Dorsolateral prefrontal cortex (tissue), 120 donors: ENCODE measurements at regions of chr2 and their contacts with region 1.

Region 1: DNA sequence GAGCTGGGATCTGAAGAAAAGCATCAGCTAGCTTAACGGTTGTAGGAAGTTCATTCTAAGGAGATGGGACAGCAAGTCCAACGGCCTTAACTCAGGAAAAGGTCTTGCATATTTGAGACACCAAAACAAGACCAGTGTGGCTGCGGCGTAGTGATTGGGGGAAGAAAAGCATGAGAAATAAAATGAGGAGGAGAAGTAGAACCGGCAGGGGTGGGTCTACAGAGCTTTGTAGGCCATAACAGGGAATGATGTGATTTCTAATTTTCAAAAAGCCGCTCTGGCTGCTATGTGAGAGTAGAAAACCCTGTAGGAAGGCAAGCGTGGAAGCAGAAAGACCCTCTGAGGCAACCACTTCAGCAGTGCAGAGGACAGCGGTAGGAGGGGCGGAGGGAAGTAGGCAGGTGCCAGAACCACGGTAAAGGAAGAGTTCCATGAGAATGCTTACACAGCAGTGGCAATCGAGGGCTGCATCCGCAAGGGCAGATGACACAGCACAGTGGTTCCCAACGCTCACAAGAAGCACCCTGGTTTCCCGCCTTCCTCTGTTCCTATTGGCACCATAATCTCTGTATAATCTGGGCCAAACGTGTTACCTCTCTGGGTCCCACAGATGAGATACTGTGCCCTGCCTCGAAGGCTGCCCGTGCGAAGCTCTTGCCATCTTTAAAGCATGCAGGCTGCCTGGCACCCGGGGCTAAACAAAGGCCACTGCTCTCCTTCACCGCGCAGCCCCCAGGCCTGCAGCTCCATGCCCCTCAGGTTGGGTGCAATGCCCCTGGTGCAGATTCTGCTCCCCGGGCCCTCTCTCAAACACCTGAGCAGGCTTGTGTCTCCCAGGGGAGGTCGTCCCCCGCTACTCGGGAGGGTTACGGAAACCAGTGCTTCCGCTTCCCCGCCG is 791 bp downstream of the ANKRD39 start:
- DNase-seq: peak in 3 of 10 donors; percentile 29 to 61 (median 45)
- H3K4me3 ChIP-seq: peak overlapping the region; percentile 55 to 100 (median 87)
- H3K27ac ChIP-seq: peak overlapping the region; percentile 36 to 95 (median 90)
- H3K27me3 ChIP-seq: no peaks in the 10 kb centered on the region
- CTCF ChIP-seq: peak in 1 of 56 donors; percentile 9

Region 2: GRCh38 chr2:96801005-96801785 is 55.8 kb before region 1 on chr2:
- intact Hi-C with region 1: no loop called
- DNase-seq: peak; percentile 58 to 85 (median 76)
- H3K4me3 ChIP-seq: no peak overlapping the region
- H3K27ac ChIP-seq: peak overlapping the region in 3 of 59 donors; percentile 6 to 28 (median 11)
- H3K27me3 ChIP-seq: no peaks in the 10 kb centered on the region
- CTCF ChIP-seq: peak in 55 of 56 donors; percentile 48 to 84 (median 77)

Region 3: GRCh38 chr2:96816128-96816835 is 40.7 kb before region 1 on chr2 and contains the start of gene CNNM3:
- intact Hi-C with region 1: loop called (anchors 5 kb)
- DNase-seq: peak; percentile 89 to 98 (median 96)
- H3K4me3 ChIP-seq: peak within 1 kb of the TSS; percentile 62 to 94 (median 82)
- H3K27ac ChIP-seq: peak within 1 kb of the TSS; percentile 92 to 99 (median 98)
- H3K27me3 ChIP-seq: no peaks in the 10 kb centered on the region
- CTCF ChIP-seq: peak in 55 of 56 donors; percentile 23 to 80 (median 60)
- total RNA-seq, gene CNNM3: 15.1 to 52.1 (median 34.2) TPM

Region 4: GRCh38 chr2:96960153-96960961 is 103.3 kb after region 1 on chr2:
- intact Hi-C with region 1: no loop called
- DNase-seq: peak; percentile 89 to 96 (median 90)
- H3K4me3 ChIP-seq: peak overlapping the region in 2 of 59 donors; percentile 7
- H3K27ac ChIP-seq: peak overlapping the region in 34 of 59 donors; percentile 1 to 78 (median 48)
- H3K27me3 ChIP-seq: no peaks in the 10 kb centered on the region
- CTCF ChIP-seq: peak; percentile 60 to 98 (median 93)